ENCODE measurements at regions of chr6 and their contacts with region 1.

Region 1: GRCh38 chr6:11770546-11771466 is 7.8 kb downstream of the ADTRP start:
- DNase-seq: peak; percentile 81 to 100
- H3K4me3 ChIP-seq: peak overlapping the region; percentile 52
- H3K27ac ChIP-seq: peak overlapping the region; percentile 98
- H3K4me1 ChIP-seq: peaks cover 83% of the 10 kb centered on the region
- H3K27me3 ChIP-seq: no peaks in the 10 kb centered on the region
- CTCF ChIP-seq: no peak

Region 2: DNA sequence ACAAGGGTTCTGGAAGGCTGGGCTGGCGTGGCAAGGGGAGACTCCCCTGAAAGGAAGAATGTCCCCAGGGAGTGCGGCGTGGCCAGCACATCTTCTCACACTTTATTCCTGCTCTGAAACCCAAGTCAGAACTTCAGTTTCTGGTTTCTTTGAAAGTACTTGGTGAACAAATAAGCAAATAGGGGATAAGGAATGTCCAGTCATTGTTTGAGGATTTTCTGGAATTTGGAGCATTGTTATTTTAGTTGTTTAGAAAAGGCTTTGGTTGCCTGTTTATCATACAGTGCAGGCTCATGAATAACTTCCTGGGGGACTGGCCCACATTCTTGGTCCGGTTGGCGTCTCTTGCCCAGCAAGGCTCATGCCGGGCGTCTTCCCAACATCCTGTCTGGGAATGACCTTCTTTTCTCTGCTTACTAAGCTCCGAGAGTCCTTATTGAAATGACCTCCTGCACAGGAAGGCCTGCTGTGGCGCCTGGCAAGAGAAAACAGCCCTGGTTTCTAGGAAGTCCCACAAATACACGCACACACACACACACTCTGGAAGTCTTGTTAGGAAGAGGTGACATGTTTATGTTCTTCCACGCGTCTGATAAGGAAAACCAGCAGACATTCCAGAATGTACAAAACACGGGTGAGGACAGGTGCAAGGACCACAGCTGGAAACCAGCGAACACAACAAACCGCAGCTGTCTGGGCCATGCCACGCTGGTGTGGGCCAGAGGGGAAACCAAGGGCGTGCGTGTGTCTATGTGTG is 161.3 kb before region 1 on chr6:
- CTCF ChIA-PET with region 1: no interaction called
- POLR2A ChIA-PET with region 1: interaction called, 3 read pairs
- intact Hi-C with region 1: loop called (anchors 5 kb)
- DNase-seq: peak; percentile 77 to 80
- H3K4me3 ChIP-seq: no peak overlapping the region
- H3K27ac ChIP-seq: no peak overlapping the region
- H3K4me1 ChIP-seq: peaks cover 24% of the 10 kb centered on the region
- H3K27me3 ChIP-seq: no peaks in the 10 kb centered on the region
- CTCF ChIP-seq: no peak

Region 3: DNA sequence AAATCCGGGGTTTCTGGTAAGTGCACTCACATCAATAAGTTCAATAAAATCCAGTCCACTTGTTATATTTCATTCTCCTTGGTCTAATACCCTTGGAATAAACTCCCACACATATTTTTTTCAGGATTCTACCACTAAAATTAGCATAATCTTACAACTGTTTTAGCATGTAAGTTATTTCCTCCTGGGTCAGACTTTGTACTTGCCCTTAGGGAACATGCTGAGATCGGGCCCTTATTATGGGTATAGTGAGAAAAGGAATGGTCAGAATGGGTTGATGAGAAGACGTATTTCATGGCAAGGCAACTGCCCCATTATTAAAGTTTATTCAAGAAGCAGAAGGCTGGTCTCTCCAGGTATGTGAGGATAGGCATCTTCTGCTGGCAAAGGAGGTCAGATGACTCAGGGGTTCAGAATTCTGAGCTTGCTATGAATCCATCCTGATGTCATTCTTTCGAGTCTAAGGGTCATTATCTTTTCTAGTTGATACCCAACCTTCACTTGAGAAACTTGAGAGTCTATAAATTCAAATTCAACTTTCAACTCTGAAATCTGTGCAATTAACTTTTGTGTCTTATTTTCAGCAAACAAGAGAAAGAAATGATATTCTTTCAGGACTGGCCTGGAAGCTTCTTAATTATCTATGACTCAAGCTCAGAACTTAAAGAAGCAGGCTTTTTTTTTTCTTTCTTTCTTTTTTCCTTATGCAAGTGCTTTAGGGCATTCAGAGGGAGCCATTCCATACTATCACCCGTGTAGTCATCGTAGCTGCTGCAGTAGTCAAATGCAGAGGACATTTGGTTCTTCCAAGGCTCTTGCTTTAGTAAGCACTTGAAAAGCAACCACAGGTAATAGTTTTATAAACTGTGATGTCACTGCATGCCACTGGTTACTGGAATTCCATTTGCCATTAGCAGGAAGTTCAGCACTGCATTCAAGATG is 85.4 kb before region 1 on chr6:
- CTCF ChIA-PET with region 1: no interaction called
- POLR2A ChIA-PET with region 1: no interaction called
- intact Hi-C with region 1: loop called (anchors 1 kb)
- DNase-seq: peak; percentile 63 to 98
- H3K4me3 ChIP-seq: peak overlapping the region; percentile 34; the same call in 1 of the 2 replicates
- H3K27ac ChIP-seq: peak overlapping the region; percentile 87
- H3K4me1 ChIP-seq: peaks cover 30% of the 10 kb centered on the region
- H3K27me3 ChIP-seq: no peaks in the 10 kb centered on the region
- CTCF ChIP-seq: no peak

Region 4: DNA sequence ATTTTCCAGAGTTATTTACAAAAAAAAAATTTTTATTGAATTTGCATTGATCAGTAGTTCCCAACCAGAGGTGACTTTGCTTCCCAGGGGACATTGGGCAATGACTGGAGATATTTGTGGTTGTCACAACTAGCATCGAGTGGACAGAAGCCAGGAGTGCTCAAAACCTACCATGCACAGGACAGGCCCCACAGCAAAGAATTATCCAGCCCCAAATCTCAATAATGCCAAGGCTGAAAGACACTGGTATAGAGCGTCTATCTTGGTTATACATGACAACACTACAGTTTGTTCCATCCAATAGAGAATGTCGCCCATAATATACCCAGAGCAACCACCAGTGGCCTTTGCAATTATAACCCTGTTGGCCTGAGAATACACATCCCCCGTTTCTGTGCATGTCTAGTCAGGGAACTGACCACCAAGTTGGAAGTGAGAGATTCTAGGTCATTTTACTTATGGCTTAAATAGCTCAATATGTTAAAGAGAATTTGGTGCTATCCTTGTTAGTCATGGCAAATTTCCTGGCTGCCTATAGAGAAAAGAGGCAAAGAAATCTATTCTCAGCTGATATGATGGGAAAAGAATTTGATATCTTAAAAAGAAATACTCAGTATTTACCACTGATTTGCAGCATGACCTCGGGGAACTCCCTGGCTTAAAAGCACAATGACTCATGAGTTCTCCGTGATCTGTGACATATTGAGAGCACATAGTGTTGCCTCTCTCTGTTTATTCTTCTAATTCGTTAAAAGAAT is 83.8 kb after region 1 on chr6:
- CTCF ChIA-PET with region 1: no interaction called
- POLR2A ChIA-PET with region 1: no interaction called
- intact Hi-C with region 1: loop called (anchors 2 kb)
- DNase-seq: peak in 1 of 2 experiments; percentile 74
- H3K4me3 ChIP-seq: no peak overlapping the region
- H3K27ac ChIP-seq: peak overlapping the region; percentile 18; the same call in 1 of the 2 replicates
- H3K4me1 ChIP-seq: peaks cover 30% of the 10 kb centered on the region
- H3K27me3 ChIP-seq: no peaks in the 10 kb centered on the region
- CTCF ChIP-seq: no peak

Region 5: DNA sequence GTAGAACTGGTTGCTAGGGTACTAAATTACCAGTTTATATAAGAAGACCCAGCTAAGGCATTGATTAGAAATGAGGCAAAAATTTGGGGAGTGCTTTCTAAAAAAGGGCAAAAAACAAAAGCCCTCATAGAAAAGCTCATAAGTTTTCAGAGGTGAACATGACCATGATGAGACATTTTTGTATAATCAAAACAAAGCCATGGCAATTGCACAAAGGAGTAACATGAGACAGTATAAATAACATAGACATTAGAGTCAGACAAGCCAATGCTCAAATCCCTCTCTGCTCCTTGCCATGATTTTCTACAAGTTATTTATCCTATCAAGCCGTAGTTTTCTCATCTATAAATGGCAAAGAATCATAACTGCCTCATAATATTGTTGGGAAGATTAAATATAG is 120.0 kb after region 1 on chr6:
- CTCF ChIA-PET with region 1: no interaction called
- POLR2A ChIA-PET with region 1: interaction called, 10 read pairs
- intact Hi-C with region 1: no loop called
- DNase-seq: no peak
- H3K4me3 ChIP-seq: no peak overlapping the region
- H3K27ac ChIP-seq: no peak overlapping the region
- H3K4me1 ChIP-seq: no peaks in the 10 kb centered on the region
- H3K27me3 ChIP-seq: no peaks in the 10 kb centered on the region
- CTCF ChIP-seq: no peak

Region 6: GRCh38 chr6:11900662-11901598 is 130.1 kb after region 1 on chr6:
- CTCF ChIA-PET with region 1: no interaction called
- POLR2A ChIA-PET with region 1: no interaction called
- intact Hi-C with region 1: no loop called
- DNase-seq: no peak
- H3K4me3 ChIP-seq: no peak overlapping the region
- H3K27ac ChIP-seq: no peak overlapping the region
- H3K4me1 ChIP-seq: no peaks in the 10 kb centered on the region
- H3K27me3 ChIP-seq: no peaks in the 10 kb centered on the region
- CTCF ChIP-seq: no peak

Region 7: DNA sequence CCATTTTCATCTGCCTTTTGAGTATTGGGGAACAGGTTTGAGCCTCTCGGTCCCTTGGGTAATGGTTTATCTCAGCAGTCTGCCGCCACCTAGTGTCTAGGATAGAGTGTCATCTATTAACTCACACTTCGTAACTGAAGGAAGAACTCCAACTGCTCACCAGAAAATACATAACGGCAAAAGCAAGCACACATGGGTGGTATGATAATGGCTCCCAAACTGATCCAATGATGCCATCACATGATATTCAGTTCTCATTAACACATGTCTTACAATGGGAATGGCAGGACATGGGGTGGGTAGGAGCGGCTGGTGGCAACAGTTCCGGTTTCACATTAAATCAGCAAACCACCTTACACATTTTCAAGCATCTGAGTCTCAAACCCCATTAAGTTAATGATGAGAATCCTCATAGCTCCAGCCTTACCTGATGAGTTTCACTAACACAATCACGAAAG is 835.1 kb after region 1 on chr6:
- CTCF ChIA-PET with region 1: no interaction called
- POLR2A ChIA-PET with region 1: no interaction called
- intact Hi-C with region 1: loop called (anchors 5 kb)
- DNase-seq: peak; percentile 53 to 79
- H3K4me3 ChIP-seq: no peak overlapping the region
- H3K27ac ChIP-seq: no peak overlapping the region
- H3K4me1 ChIP-seq: peaks cover 16% of the 10 kb centered on the region
- H3K27me3 ChIP-seq: no peaks in the 10 kb centered on the region
- CTCF ChIP-seq: peak; percentile 98